IMR-90 (cell line): ENCODE measurements at regions of chr7 and their contacts with region 1.

Region 1: DNA sequence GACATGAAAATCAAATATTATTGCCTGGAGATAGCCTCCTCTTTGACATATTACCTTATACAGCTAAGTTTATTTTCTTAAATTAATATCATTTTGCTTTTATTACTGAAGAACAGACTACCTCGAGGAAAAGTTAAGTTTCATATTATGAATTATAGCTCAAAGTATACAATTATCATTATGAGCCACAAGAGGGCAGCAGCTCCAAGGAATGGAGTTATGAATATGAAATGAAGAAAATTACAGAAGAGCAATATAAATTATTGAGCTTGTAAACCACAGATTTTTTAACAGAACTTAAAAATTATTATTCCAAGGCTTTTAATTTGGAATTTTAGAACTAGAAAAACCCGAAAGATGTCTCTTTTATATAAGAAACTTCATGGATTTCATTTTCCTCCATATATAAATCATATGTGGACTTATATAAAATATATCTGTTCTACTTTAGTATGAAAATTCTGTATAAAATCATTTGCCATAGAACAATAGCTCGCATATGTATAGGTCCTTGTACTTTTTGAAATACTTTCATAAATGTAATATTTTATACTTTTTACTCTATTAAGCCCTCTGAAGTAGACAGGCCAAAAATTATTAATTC is 40.1 kb downstream of the IQUB start:
- DNase-seq: peak; percentile 27
- ATAC-seq: no peak
- H3K4me3 ChIP-seq: no peak overlapping the region
- H3K27ac ChIP-seq: no peak overlapping the region
- H3K4me1 ChIP-seq: no peaks in the 10 kb centered on the region
- H3K27me3 ChIP-seq: no peaks in the 10 kb centered on the region
- CTCF ChIP-seq: peak; percentile 71
- POLR2A ChIP-seq: no peak
- RAD21 ChIP-seq: peak; percentile 66

Region 2: DNA sequence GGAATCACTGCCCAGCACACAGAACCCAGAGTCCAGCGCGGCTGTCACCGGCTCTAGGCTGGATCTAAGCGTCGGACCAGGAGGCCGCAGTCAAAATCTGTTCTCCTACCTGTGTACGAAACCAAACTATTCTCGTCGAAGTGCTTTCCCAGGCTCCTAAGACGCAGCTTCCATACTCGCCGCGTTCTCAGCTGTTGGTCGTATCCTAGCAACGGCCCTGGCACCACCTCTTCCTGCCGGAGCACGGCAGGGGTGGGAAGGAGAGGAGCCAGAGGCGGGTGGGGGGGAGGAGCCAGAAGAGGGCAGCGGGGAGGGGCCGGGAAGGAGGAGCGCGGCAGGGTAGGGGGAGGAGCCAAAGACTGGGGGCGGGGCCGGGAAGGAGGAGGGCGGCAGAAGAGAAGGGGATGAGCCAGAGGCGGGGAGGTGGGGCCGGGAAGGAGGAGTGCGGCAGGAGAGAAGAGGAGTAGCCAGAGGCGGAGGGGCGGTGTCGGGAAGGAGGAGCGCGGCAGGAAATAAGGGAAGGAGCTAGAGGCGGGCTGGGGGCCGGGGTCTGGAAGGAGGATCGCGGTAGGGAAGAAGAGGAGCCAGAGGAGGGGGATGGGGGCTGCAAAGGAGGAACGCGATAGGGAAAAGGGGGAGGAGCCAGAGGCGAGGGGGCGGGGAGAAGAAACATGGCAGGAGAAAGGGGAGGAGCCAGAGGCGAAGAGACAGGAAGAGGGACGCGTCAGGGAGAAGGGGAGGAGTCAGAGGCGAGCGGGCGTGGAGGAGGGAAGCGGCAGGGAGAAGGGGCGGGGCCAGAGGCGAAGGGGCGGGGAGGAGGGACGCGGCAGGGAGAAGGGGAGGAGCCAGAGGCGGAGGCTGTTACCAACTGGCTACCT is 40.3 kb after region 1 on chr7 and contains the start of gene IQUB:
- CTCF ChIA-PET with region 1: no interaction called
- POLR2A ChIA-PET with region 1: no interaction called
- dilution Hi-C with region 1: no loop called
- in situ Hi-C with region 1: no loop called
- intact Hi-C with region 1: loop called (anchors 2 kb)
- DNase-seq: peak; percentile 95
- ATAC-seq: peak; percentile 92
- H3K4me3 ChIP-seq: peak within 1 kb of the TSS; percentile 82
- H3K27ac ChIP-seq: peak within 1 kb of the TSS; percentile 97
- H3K4me1 ChIP-seq: peaks cover 5% of the 10 kb centered on the region; the same call in 1 of the 2 replicates
- H3K27me3 ChIP-seq: no peaks in the 10 kb centered on the region
- CTCF ChIP-seq: no peak
- POLR2A ChIP-seq: peak; percentile 60; the same call in 1 of the 2 replicates
- RAD21 ChIP-seq: no peak
- total RNA-seq, gene IQUB: 0.18 and 0.28 TPM in 2 replicates

Region 3: GRCh38 chr7:123682690-123683089 is 188.4 kb after region 1 on chr7:
- CTCF ChIA-PET with region 1: no interaction called
- POLR2A ChIA-PET with region 1: no interaction called
- dilution Hi-C with region 1: no loop called
- in situ Hi-C with region 1: no loop called
- intact Hi-C with region 1: loop called (anchors 5 kb)
- DNase-seq: peak; percentile 77
- ATAC-seq: peak; percentile 74
- H3K4me3 ChIP-seq: no peak overlapping the region
- H3K27ac ChIP-seq: no peak overlapping the region
- H3K4me1 ChIP-seq: 0 out of 2 replicates have a peak, but pooled peaks cover 3% of the 10 kb centered on the region
- H3K27me3 ChIP-seq: no peaks in the 10 kb centered on the region
- CTCF ChIP-seq: peak; percentile 68
- POLR2A ChIP-seq: no peak
- RAD21 ChIP-seq: peak; percentile 68

Region 4: GRCh38 chr7:123871998-123872867 is 377.9 kb after region 1 on chr7:
- CTCF ChIA-PET with region 1: interaction called, 4 read pairs
- POLR2A ChIA-PET with region 1: no interaction called
- dilution Hi-C with region 1: no loop called
- in situ Hi-C with region 1: no loop called
- intact Hi-C with region 1: loop called (anchors 5 kb)
- DNase-seq: peak; percentile 42
- ATAC-seq: peak; percentile 81
- H3K4me3 ChIP-seq: no peak overlapping the region
- H3K27ac ChIP-seq: no peak overlapping the region
- H3K4me1 ChIP-seq: no peaks in the 10 kb centered on the region
- H3K27me3 ChIP-seq: no peaks in the 10 kb centered on the region
- CTCF ChIP-seq: peak; percentile 53
- POLR2A ChIP-seq: no peak
- RAD21 ChIP-seq: peak; percentile 68